ENCODE measurements at regions of chr2 and their contacts with region 1.

Region 1: GRCh38 chr2:142989273-142990204 is 112.1 kb downstream of the KYNU start:
- DNase-seq: peak; percentile 6 to 68
- ATAC-seq: peak; percentile 80 to 84; a peak in 5 of 6 replicates
- H3K4me3 ChIP-seq: no peak overlapping the region
- H3K27ac ChIP-seq: peak overlapping the region in 1 of 2 experiments; percentile 33; a peak in 1 of 6 replicates
- H3K4me1 ChIP-seq: peaks cover 50% of the 10 kb centered on the region
- CTCF ChIP-seq: peak; percentile 65
- EP300 ChIP-seq: no peak
- POLR2A ChIP-seq: no peak
- RAD21 ChIP-seq: peak; percentile 57 to 66

Region 2: GRCh38 chr2:142903780-142904179 is 85.8 kb before region 1 on chr2:
- CTCF ChIA-PET with region 1: no interaction called
- POLR2A ChIA-PET with region 1: no interaction called
- DNase-seq: no peak
- ATAC-seq: no peak
- H3K4me3 ChIP-seq: no peak overlapping the region
- H3K27ac ChIP-seq: no peak overlapping the region
- H3K4me1 ChIP-seq: peaks cover 56% of the 10 kb centered on the region
- CTCF ChIP-seq: no peak
- EP300 ChIP-seq: no peak
- POLR2A ChIP-seq: no peak
- RAD21 ChIP-seq: no peak

Region 3: GRCh38 chr2:143034292-143035074 is 44.9 kb after region 1 on chr2:
- CTCF ChIA-PET with region 1: no interaction called
- POLR2A ChIA-PET with region 1: no interaction called
- DNase-seq: peak; percentile 31 to 85
- ATAC-seq: peak; percentile 74 to 77
- H3K4me3 ChIP-seq: no peak overlapping the region
- H3K27ac ChIP-seq: no peak overlapping the region
- H3K4me1 ChIP-seq: no peaks in the 10 kb centered on the region
- CTCF ChIP-seq: peak; percentile 99
- EP300 ChIP-seq: no peak
- POLR2A ChIP-seq: no peak
- RAD21 ChIP-seq: peak; percentile 50 to 53; a peak in 4 of 5 replicates

Region 4: DNA sequence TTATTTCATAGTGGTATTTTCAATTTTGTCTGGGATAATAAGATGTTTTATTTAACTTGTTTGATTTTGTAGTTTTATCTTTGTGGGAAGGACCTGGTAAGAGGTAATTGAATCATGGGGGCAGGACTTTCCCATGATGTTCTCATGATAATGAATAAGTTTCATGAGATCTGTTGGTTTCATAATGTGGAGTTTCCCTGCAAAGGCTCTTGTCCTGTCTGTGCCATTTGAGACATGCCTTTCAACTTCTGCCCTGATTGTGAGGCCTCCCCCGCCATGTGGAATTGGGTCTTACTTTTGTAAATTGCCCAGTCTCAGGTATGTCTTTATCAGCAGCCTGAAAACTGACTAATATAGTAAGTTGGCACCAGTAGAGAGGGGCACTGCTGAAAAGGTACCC is 61.9 kb after region 1 on chr2:
- CTCF ChIA-PET with region 1: no interaction called
- POLR2A ChIA-PET with region 1: interaction called, 11 read pairs
- DNase-seq: no peak
- ATAC-seq: no peak
- H3K4me3 ChIP-seq: no peak overlapping the region
- H3K27ac ChIP-seq: no peak overlapping the region
- H3K4me1 ChIP-seq: no peaks in the 10 kb centered on the region
- CTCF ChIP-seq: no peak
- EP300 ChIP-seq: no peak
- POLR2A ChIP-seq: no peak
- RAD21 ChIP-seq: no peak